ENCODE measurements at regions of chr6 and their contacts with region 1.

Region 1: DNA sequence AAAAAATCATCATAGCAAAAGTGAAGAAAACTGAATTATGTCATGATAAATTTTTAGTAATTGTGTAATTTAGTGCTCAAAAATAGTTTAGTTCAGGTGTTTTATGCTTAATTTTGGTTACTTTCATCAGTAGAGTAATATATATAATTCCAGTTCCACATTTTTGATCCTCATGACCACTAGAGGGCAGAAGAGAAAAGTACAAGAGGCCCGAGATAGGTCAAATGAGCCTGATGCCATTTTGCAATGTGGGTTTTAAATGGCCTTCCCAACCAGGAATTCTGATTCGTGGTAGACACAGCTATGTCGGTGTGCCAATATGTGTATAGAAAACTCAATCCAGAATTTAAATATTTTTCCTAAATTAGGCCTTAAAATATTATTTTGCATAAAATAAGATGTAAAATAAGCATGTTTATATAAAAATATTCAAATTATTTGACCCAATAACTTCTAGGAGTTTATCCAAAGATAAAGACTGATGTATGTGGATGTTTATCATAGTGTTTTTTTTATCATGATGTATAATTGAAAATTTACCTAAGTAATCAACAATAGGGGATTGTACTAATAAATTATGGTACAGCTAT is 159.7 kb upstream of the RPS6KA2 start:
- DNase-seq: no peak
- ATAC-seq: peak in 3 of 4 donors; percentile 39 to 62 (median 57)
- H3K4me3 ChIP-seq: no peak overlapping the region
- H3K27ac ChIP-seq: no peak overlapping the region
- H3K4me1 ChIP-seq: peaks cover 0 to 3% (median 0%) of the 10 kb centered on the region in 12 donors
- H3K27me3 ChIP-seq: no peaks in the 10 kb centered on the region
- CTCF ChIP-seq: peak; percentile 64 to 82 (median 75)
- POLR2A ChIP-seq: no peak

Region 2: GRCh38 chr6:166862287-166862977 is 75.6 kb after region 1 on chr6:
- intact Hi-C with region 1: loop called in 1 of 10 experiments (anchors 5 kb)
- DNase-seq: peak in 4 of 5 donors; percentile 31 to 69 (median 39)
- ATAC-seq: peak in 3 of 4 donors; percentile 60 to 79 (median 63)
- H3K4me3 ChIP-seq: peak overlapping the region; percentile 34 to 71 (median 62)
- H3K27ac ChIP-seq: peak overlapping the region in 8 of 12 donors; percentile 32 to 65 (median 54)
- H3K4me1 ChIP-seq: peaks cover 0 to 16% (median 6%) of the 10 kb centered on the region in 12 donors
- H3K27me3 ChIP-seq: peaks cover 0 to 46% (median 19%) of the 10 kb centered on the region in 9 donors
- CTCF ChIP-seq: peak in 4 of 12 donors; percentile 4 to 24 (median 13)
- POLR2A ChIP-seq: no peak

Region 3: GRCh38 chr6:166950443-166950821 is 163.6 kb after region 1 on chr6:
- intact Hi-C with region 1: loop called (anchors 2 to 10 kb)
- DNase-seq: no peak
- ATAC-seq: peak in 3 of 4 donors; percentile 32 to 53 (median 33)
- H3K4me3 ChIP-seq: peak overlapping the region in 6 of 12 donors; percentile 35 to 54 (median 49)
- H3K27ac ChIP-seq: peak overlapping the region; percentile 59 to 92 (median 80)
- H3K4me1 ChIP-seq: peaks cover 0 to 44% (median 3%) of the 10 kb centered on the region in 12 donors
- H3K27me3 ChIP-seq: no peaks in the 10 kb centered on the region
- CTCF ChIP-seq: no peak
- POLR2A ChIP-seq: no peak

Region 4: DNA sequence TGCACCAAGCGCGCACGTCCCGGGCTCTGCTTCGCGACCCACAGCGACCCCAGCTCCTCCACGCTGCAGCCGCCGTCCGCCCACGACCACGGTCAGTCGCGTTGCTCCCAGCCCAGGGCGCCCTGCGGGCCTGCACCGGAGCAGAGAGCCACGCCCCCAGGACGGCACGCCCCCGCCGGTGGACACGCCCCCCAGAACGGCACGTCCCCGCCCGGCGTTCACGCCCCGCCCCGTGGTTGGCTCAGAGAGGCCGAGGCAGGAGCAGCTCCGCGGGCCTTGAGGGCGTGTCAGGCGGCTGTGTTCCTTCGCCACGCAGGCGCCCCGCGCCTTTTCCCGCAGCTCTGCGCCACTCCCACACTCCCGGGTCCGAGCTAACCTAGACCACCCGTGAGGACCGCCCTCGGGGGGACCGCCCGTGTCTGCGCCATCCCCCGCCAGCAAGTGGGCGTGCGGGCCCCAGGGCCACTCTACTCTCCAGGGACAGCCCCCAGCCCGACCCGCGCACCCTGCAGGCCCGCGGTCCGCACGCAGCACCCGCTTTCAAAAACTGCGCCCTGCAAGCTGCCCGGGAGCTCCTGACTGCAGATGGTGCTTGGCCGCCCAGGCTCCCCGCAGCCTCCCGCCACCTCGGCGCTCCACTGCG is 169.8 kb after region 1 on chr6 and contains the start of gene RNASET2:
- intact Hi-C with region 1: loop called (anchors 2 to 10 kb)
- DNase-seq: peak; percentile 97 to 100 (median 98)
- ATAC-seq: peak; percentile 98 to 99 (median 98)
- H3K4me3 ChIP-seq: peak within 1 kb of the TSS; percentile 61 to 98 (median 88)
- H3K27ac ChIP-seq: peak within 1 kb of the TSS; percentile 73 to 98 (median 84)
- H3K4me1 ChIP-seq: peaks cover 0 to 63% (median 12%) of the 10 kb centered on the region in 12 donors
- H3K27me3 ChIP-seq: no peaks in the 10 kb centered on the region
- CTCF ChIP-seq: peak in 1 of 12 donors; percentile 17
- POLR2A ChIP-seq: peak in 1 of 2 donors; percentile 83
- total RNA-seq, gene RNASET2: 7.9 to 76.0 (median 13.5) TPM

Region 5: GRCh38 chr6:166989427-166990032 is 202.7 kb after region 1 on chr6:
- intact Hi-C with region 1: loop called in 3 of 10 experiments (anchors 2 to 5 kb)
- DNase-seq: peak in 1 of 5 donors; percentile 21
- ATAC-seq: peak in 2 of 4 donors; percentile 34 to 47
- H3K4me3 ChIP-seq: no peak overlapping the region
- H3K27ac ChIP-seq: no peak overlapping the region
- H3K4me1 ChIP-seq: no peaks in the 10 kb centered on the region
- H3K27me3 ChIP-seq: no peaks in the 10 kb centered on the region
- CTCF ChIP-seq: peak in 11 of 12 donors; percentile 28 to 69 (median 43)
- POLR2A ChIP-seq: no peak

Region 6: GRCh38 chr6:167141667-167142432 is 355.1 kb after region 1 on chr6:
- intact Hi-C with region 1: loop called in 4 of 10 experiments (anchors 5 kb)
- DNase-seq: peak in 4 of 5 donors; percentile 24 to 62 (median 48)
- ATAC-seq: peak; percentile 75 to 92 (median 87)
- H3K4me3 ChIP-seq: no peak overlapping the region
- H3K27ac ChIP-seq: no peak overlapping the region
- H3K4me1 ChIP-seq: no peaks in the 10 kb centered on the region
- H3K27me3 ChIP-seq: peaks cover 0 to 49% (median 11%) of the 10 kb centered on the region in 9 donors
- CTCF ChIP-seq: peak; percentile 56 to 80 (median 70)
- POLR2A ChIP-seq: no peak